Activated naive CD4-positive, alpha-beta T cell treated with anti-CD3 and anti-CD28 coated beads for 36 hours (primary cell): ENCODE measurements at regions of chr14 and their contacts with region 1.

Region 1: DNA sequence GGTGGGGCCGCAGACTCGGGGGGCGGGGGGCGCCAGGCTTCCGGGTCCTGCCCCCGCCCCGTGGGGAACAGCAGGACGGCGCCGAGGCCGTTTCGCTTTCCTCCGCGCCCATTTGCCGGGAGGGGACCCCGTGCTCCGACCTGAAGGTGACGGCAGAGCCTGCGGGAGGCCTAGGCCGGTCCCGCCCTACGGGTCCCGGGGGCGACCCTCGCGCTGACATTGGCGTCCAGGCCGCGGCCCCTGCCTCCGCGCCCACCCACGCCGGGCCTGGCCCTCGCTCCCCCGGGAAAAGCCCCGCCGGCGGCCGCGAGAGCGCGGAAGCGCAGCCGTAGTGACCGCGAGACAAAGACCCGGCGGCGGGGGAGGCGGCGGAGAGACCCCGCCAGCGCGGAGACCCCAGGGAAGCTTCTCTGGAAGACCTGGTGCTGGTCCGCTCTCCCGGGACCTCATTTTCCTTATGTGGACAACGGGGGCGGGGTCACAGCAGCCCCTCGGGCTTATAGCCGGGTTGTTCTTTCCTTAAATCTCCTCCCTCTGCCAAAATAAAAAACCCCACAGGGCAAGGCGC is 37.1 kb upstream of the RCOR1 start:
- DNase-seq: peak; percentile 56
- H3K4me3 Mint-ChIP-seq: peak overlapping the region; percentile 52
- H3K27ac Mint-ChIP-seq: no peak overlapping the region
- H3K4me1 Mint-ChIP-seq: no peaks in the 10 kb centered on the region
- H3K27me3 Mint-ChIP-seq: no peaks in the 10 kb centered on the region

Region 2: DNA sequence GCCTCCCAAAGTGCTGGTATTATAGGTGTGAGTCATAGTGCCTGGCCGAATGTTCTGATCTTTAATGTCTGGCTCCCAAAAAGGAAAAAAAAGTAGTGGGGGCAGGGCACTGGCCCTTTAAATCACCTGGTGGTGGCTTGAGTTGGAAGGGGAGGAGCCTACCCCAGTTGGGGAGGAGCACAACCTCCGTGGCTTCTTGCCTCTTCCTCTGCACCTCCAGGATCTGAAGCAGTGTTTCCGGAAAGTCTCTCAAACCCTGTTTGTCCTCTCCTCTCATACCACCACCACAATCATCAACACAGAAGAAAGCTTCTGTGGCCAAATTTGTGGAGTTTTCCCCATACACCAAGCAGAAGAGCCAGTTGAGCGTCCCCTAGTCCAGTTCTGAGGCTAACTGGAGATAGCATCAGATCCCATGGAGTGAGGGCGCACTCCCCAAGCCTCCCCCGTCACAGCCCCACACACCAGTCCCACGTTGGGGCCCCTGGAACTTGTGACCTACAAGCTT is 12.8 kb after region 1 on chr14:
- CTCF ChIA-PET with region 1: interaction called, 3 read pairs
- intact Hi-C with region 1: loop called (anchors 2 kb)
- DNase-seq: peak; percentile 78
- H3K4me3 Mint-ChIP-seq: peak overlapping the region; percentile 62
- H3K27ac Mint-ChIP-seq: peak overlapping the region; percentile 88
- H3K4me1 Mint-ChIP-seq: peaks cover 11% of the 10 kb centered on the region
- H3K27me3 Mint-ChIP-seq: no peaks in the 10 kb centered on the region